ENCODE measurements at regions of chr16 and their contacts with region 1.

Region 1: DNA sequence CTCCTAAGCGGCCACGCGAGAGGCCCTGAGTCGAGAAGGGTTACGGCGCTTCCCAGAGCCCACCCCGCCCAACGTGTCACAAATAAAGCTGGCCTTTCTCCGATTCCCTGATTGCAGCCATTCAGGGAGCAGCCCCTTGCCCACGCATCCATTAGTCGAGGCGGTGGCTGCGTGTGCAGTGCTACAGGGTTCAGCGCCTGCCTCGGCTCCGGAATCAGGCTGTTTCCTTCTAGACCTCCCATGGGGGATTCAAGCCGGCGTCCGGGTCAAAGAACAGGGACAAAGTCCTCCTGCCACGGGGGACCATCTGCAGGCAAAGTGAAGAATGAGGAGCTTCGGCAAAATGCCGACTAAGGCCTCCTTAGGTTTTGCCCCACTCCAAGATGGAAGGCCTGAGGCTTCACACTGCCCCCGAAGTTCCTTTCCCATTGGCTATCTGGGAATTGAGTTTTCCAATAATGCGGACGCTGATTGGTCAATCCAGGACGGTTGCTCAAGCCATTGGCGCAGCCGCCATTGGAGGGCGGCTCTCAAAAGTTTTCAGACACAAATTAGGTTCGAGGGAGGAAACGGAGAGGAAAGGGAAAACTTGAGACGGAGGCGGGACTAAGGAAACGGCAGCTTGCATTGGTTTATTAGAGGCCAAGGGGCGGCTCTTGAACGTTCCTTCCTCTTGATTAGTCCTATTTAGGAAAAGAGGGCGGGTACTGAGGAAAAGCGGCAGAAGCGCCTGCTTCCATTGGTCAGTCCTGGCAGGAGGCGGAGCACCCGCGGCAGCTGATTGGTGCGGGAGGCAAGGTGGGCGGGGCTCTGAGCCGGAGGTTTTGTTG is 430 bp upstream of the KATNB1 start:
- DNase-seq: peak; percentile 99
- H3K4me3 Mint-ChIP-seq: peak overlapping the region; percentile 99
- H3K27ac Mint-ChIP-seq: peak overlapping the region; percentile 98
- H3K4me1 Mint-ChIP-seq: peaks cover 21% of the 10 kb centered on the region
- H3K27me3 Mint-ChIP-seq: no peaks in the 10 kb centered on the region

Region 2: GRCh38 chr16:57475711-57476339 is 259.3 kb before region 1 on chr16:
- intact Hi-C with region 1: loop called (anchors 10 kb)
- DNase-seq: peak; percentile 95
- H3K4me3 Mint-ChIP-seq: peak overlapping the region; percentile 55
- H3K27ac Mint-ChIP-seq: peak overlapping the region; percentile 83
- H3K4me1 Mint-ChIP-seq: peaks cover 14% of the 10 kb centered on the region
- H3K27me3 Mint-ChIP-seq: peaks cover 2% of the 10 kb centered on the region

Region 3: DNA sequence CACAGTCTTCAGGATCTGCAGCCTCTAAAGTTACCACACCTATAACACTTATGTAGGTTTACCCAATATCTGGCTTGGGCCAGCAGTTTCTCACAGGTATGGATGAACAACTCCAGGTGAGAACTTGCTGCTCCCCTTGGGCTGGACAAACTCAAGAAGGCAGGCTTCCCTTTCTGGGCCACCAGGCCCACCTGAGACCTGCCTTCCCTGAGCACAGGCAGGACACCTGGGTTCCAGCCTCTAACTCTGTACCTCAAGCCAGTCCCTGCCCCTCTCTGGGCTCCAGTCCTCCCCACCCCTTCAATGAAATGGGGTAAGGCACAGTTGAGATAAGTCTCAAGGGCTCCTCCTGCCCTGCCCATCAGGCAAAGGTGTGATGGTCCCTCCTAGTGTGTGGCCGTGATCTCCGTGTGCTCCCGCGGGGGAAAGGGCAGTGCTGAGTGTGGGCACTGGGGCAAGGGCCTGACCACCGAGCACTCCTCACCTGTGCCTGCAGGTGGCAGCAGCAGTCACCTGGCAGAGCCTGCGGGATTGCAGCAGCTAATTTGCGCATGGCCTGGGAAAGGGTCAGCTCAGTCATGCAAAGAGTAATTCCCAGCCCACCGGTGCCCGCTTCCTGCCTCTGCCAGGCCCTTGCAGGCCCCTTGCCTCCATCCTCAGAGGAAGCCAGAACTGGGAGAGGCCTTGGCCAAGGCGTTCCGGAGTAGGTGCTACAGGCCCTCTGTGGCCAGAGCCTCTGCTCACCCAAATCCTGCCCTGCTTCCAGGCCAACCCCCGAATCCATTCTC is 134.9 kb before region 1 on chr16:
- intact Hi-C with region 1: loop called (anchors 2 kb)
- DNase-seq: peak; percentile 80
- H3K4me3 Mint-ChIP-seq: no peak overlapping the region
- H3K27ac Mint-ChIP-seq: peak overlapping the region; percentile 95
- H3K4me1 Mint-ChIP-seq: peaks cover 41% of the 10 kb centered on the region
- H3K27me3 Mint-ChIP-seq: peaks cover 3% of the 10 kb centered on the region

Region 4: GRCh38 chr16:57802341-57803133 is 67.4 kb after region 1 on chr16 and contains the start of gene KIFC3:
- intact Hi-C with region 1: loop called (anchors 2 kb)
- DNase-seq: peak; percentile 91
- H3K4me3 Mint-ChIP-seq: peak within 1 kb of the TSS; percentile 87
- H3K27ac Mint-ChIP-seq: peak within 1 kb of the TSS; percentile 89
- H3K4me1 Mint-ChIP-seq: peaks cover 27% of the 10 kb centered on the region
- H3K27me3 Mint-ChIP-seq: peaks cover 68% of the 10 kb centered on the region
- total RNA-seq, gene KIFC3: 0.58 and 1.7 TPM in 2 replicates

Region 5: GRCh38 chr16:58000706-58001676 is 265.9 kb after region 1 on chr16 and contains the start of gene USB1:
- intact Hi-C with region 1: loop called (anchors 2 kb)
- DNase-seq: peak; percentile 97
- H3K4me3 Mint-ChIP-seq: peak within 1 kb of the TSS; percentile 96
- H3K27ac Mint-ChIP-seq: peak within 1 kb of the TSS; percentile 89
- H3K4me1 Mint-ChIP-seq: peaks cover 34% of the 10 kb centered on the region
- H3K27me3 Mint-ChIP-seq: no peaks in the 10 kb centered on the region
- total RNA-seq, gene USB1: 50.9 and 54.4 TPM in 2 replicates